ENCODE measurements at regions of chr3 and their contacts with region 1.

Region 1: DNA sequence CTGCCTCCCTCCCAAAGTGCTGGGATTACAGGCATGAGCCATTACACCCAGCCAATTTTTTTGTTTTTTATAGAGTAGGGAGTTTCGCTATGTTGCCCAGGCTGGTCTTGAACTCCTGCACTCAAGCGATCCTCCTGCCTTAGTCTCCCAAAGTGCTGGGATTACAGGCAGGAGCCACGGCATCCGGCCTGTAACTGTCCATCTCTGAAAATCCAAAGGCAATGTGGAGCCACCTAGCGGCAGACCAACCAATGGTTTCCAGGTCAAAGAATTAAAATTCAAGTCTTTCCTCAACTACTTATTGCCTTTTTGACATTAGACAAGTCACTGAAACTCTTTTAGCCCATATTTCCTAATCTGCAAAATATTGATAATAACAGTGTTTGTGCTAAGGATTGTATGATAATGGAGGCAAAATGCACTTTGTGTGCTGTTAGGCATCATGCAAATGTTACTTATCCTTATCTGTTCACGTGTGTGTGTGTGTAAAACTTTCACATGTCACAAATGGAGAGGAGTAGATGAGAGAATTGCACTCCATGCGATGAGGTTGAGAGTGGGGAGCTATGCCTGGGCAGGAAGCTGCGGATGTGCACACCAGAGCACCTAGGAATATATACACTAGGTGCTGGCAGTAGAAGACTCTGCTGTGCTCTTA is 48.7 kb downstream of the COL8A1 start:
- DNase-seq: peak; percentile 53 to 71
- ATAC-seq: peak in 1 of 4 donors; percentile 48
- H3K4me3 ChIP-seq: no peak overlapping the region
- H3K27ac ChIP-seq: no peak overlapping the region
- H3K4me1 ChIP-seq: no peaks in the 10 kb centered on the region
- H3K27me3 ChIP-seq: no peaks in the 10 kb centered on the region
- CTCF ChIP-seq: peak; percentile 61

Region 2: DNA sequence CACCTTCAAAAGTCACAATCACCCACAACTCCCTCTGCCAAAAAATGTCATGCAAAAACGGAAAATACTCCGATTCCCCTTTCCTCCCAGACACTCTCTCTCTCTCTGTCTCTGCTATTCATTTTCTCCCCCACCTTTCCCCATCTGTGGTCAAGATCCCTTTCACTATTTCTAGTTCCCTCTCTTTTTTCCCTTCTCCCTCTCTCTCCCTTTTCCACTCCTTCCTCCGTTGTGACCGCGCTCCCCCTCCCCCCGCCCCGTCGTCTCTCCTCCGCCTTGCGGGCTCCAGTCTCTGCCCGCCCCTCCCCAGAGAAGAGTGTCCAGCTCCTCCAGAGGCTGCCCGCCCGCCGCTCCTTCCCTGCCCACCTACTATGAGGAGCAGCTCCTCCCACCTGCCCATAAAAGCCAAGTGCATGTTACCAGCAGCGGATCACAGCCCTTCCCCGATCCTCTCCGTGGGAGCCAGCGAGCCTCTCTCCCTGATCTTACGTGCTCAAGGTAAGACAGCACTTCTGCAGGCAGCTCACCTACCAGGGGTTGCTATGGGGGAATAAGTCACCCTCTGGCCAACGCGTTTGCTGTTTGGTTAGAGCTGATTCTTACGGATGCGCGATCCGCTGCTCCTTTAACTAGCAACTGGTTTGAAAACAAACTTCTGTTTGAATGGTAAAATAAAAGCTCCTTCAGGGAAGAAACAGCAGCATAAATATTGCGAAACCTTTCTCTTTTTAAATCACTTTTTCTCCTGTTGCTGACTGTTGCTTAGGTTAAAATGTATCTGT is 48.7 kb before region 1 on chr3 and contains the start of gene COL8A1:
- intact Hi-C with region 1: loop called in 1 of 2 experiments (anchors 10 kb)
- DNase-seq: peak; percentile 52 to 74
- ATAC-seq: peak; percentile 30 to 68 (median 40)
- H3K4me3 ChIP-seq: peak within 1 kb of the TSS; percentile 58
- H3K27ac ChIP-seq: peak within 1 kb of the TSS; percentile 47
- H3K4me1 ChIP-seq: no peaks in the 10 kb centered on the region
- H3K27me3 ChIP-seq: peaks cover 0 to 34% (median 13%) of the 10 kb centered on the region in 3 donors
- CTCF ChIP-seq: no peak
- total RNA-seq, gene COL8A1: 1.2 to 11.3 (median 4.9) TPM